ENCODE measurements at regions of chr11 and their contacts with region 1.

Region 1: DNA sequence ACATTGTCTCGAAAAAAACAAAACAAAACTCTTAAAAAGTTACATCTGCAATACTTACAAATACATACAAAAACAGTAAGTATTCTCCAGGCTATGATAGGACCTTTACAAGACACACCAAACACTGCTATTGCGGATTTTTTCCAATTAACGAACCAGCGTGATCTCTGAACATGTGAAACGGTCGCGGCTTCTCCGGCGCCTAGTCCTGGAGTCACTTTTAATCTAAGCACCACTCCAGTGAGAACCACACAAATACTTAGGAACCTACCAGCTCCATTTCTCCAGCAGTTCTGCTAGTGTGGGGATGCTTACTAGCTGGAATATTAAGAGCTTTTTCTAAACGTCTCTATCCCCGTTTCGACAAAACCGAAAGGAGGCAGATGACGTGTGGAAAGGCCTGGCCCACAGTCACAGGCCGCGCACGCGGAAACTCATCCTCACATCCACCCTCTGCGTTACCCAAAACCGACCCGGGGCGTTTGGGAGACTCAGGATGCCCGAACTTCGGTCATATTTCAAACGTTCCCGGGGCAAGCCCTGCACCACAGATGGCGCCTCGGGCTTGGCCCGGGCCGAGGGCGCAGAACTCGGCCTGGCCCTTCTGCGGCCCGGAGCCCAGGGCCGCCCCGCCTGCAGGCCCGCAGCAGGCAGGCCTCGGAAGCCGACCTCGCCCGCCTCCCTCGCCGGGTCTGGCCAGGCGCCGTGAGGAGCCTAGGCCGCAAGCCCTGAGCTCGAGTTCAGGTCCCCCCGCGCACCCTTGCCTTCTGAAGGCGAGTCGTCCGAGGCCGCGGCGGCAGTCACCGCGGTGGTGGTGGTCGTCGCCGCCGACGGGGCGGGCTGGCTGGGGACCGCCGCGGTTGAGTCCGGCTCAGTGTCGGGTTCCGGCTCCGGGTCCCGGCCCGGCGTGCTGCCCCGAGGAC is 575 bp downstream of the FNBP4 start:
- DNase-seq: peak; percentile 56 to 90 (median 68)
- ATAC-seq: peak; percentile 38
- H3K4me3 ChIP-seq: peak overlapping the region; percentile 89
- H3K4me3 Mint-ChIP-seq: peak overlapping the region; percentile 98
- H3K27ac ChIP-seq: peak overlapping the region; percentile 97 to 98
- H3K27ac Mint-ChIP-seq: peak overlapping the region; percentile 99
- H3K4me1 ChIP-seq: peaks cover 35% of the 10 kb centered on the region
- H3K4me1 Mint-ChIP-seq: peaks cover 34% of the 10 kb centered on the region
- H3K27me3 ChIP-seq: no peaks in the 10 kb centered on the region
- H3K27me3 Mint-ChIP-seq: no peaks in the 10 kb centered on the region
- CTCF ChIP-seq: no peak

Region 2: DNA sequence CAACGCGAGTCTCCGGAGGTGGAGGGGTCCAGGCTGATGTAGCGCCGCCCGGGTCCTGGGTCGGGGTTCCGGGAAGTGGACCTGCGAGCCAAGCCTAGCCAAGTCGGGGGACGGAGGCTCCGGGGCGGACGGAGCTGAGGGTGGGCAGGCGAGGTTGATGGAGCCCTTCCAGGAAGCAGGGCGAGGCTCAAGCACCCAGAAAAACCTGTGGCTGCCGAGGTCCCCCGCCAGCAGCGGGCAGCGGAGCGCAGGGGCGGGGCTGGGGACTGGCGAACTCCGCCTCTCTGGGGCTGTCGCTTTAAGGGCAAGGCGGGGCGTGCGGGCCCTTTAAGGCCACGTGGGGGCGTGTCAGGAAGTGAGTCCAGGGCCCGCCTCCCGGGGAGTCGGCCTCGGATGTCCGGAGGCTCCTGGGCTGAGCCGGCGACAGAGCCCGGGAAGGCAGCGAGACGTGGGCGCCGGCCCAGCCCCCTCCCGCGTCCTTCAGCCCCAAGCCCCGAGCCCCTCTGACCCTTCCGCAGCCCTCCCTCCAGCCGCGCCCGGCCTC is 1961.7 kb before region 1 on chr11 and contains the start of gene SLC35C1:
- CTCF ChIA-PET with region 1: no interaction called
- POLR2A ChIA-PET with region 1: no interaction called
- intact Hi-C with region 1: loop called in 1 of 2 experiments (anchors 5 kb)
- DNase-seq: peak; percentile 90 to 98 (median 96)
- ATAC-seq: peak; percentile 94
- H3K4me3 ChIP-seq: peak within 1 kb of the TSS; percentile 99
- H3K4me3 Mint-ChIP-seq: peak within 1 kb of the TSS; percentile 94
- H3K27ac ChIP-seq: peak within 1 kb of the TSS; percentile 76 to 79
- H3K27ac Mint-ChIP-seq: peak within 1 kb of the TSS; percentile 76
- H3K4me1 ChIP-seq: peaks cover 54% of the 10 kb centered on the region
- H3K4me1 Mint-ChIP-seq: peaks cover 53% of the 10 kb centered on the region
- H3K27me3 ChIP-seq: no peaks in the 10 kb centered on the region
- H3K27me3 Mint-ChIP-seq: no peaks in the 10 kb centered on the region
- CTCF ChIP-seq: no peak
- total RNA-seq, gene SLC35C1: 4.4 to 4.9 TPM

Region 3: GRCh38 chr11:47213985-47214564 is 552.5 kb before region 1 on chr11:
- CTCF ChIA-PET with region 1: no interaction called
- POLR2A ChIA-PET with region 1: interaction called, 10 read pairs
- intact Hi-C with region 1: no loop called
- DNase-seq: peak; percentile 68 to 92 (median 78)
- ATAC-seq: peak; percentile 70
- H3K4me3 ChIP-seq: peak overlapping the region; percentile 67
- H3K4me3 Mint-ChIP-seq: peak overlapping the region; percentile 100
- H3K27ac ChIP-seq: peak overlapping the region; percentile 80 to 91
- H3K27ac Mint-ChIP-seq: peak overlapping the region; percentile 97
- H3K4me1 ChIP-seq: peaks cover 32% of the 10 kb centered on the region
- H3K4me1 Mint-ChIP-seq: peaks cover 38% of the 10 kb centered on the region
- H3K27me3 ChIP-seq: no peaks in the 10 kb centered on the region
- H3K27me3 Mint-ChIP-seq: no peaks in the 10 kb centered on the region
- CTCF ChIP-seq: no peak

Region 4: DNA sequence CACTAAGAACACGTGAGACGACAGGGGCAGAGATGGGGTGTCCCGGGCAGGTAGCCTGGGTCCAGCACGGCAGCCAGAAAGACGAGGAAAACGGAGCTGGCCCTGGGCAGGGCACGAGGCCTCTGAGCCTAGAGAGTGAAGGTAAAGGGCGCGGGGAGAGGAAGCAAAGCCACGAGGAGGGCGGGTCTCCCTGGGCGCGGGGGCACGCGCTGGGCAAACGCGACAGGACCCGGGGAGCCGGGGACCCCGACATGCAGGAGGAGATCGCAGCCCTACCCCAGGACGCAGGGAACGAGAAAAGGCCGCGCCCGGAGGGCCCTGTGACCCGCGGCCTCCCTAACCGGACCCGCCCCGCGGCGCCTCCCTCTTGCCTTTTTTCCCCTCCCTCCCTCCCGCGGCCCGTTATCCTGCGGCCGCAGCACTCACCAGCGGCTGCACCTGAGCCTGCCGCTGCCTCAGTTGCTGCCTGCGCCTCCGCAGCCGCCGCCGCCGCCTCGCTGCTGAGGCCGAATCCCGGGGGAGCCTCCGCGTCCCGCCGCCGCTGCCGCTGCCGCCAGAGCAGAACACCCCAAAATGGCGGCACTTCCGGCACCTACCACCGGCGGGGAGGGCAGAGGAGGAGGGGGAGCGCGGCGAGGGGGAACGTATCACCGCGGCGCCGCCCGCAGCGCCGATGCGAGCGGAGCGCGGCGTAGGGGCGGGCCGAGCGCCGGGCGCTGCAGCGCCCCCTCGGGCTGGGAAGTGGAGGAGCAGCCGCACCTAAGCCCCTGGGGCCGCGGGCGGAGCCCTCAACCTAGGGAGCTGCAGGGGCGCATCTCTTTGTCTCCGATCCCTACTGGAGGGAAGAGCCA is 213.8 kb before region 1 on chr11 and contains the start of gene CELF1:
- CTCF ChIA-PET with region 1: no interaction called
- POLR2A ChIA-PET with region 1: no interaction called
- intact Hi-C with region 1: loop called in 1 of 2 experiments (anchors 2 kb)
- DNase-seq: peak; percentile 85 to 97 (median 91)
- ATAC-seq: peak; percentile 93
- H3K4me3 ChIP-seq: peak within 1 kb of the TSS; percentile 99
- H3K4me3 Mint-ChIP-seq: peak within 1 kb of the TSS; percentile 98
- H3K27ac ChIP-seq: peak within 1 kb of the TSS; percentile 78 to 88
- H3K27ac Mint-ChIP-seq: peak within 1 kb of the TSS; percentile 98
- H3K4me1 ChIP-seq: peaks cover 42% of the 10 kb centered on the region
- H3K4me1 Mint-ChIP-seq: peaks cover 54% of the 10 kb centered on the region
- H3K27me3 ChIP-seq: no peaks in the 10 kb centered on the region
- H3K27me3 Mint-ChIP-seq: no peaks in the 10 kb centered on the region
- CTCF ChIP-seq: peak; percentile 81
- total RNA-seq, gene CELF1: 103 to 111 TPM

Region 5: GRCh38 chr11:47642099-47642855 is 124.3 kb before region 1 on chr11 and contains the start of gene MTCH2:
- CTCF ChIA-PET with region 1: no interaction called
- POLR2A ChIA-PET with region 1: interaction called, 4 read pairs
- intact Hi-C with region 1: loop called (anchors 1 to 2 kb)
- DNase-seq: peak; percentile 91 to 99 (median 95)
- ATAC-seq: peak; percentile 92
- H3K4me3 ChIP-seq: peak within 1 kb of the TSS; percentile 96
- H3K4me3 Mint-ChIP-seq: peak within 1 kb of the TSS; percentile 90
- H3K27ac ChIP-seq: peak within 1 kb of the TSS; percentile 88 to 91
- H3K27ac Mint-ChIP-seq: peak within 1 kb of the TSS; percentile 89
- H3K4me1 ChIP-seq: peaks cover 28% of the 10 kb centered on the region
- H3K4me1 Mint-ChIP-seq: peaks cover 26% of the 10 kb centered on the region
- H3K27me3 ChIP-seq: no peaks in the 10 kb centered on the region
- H3K27me3 Mint-ChIP-seq: no peaks in the 10 kb centered on the region
- CTCF ChIP-seq: peak; percentile 6
- total RNA-seq, gene MTCH2: 11.8 to 12.7 TPM

Region 6: DNA sequence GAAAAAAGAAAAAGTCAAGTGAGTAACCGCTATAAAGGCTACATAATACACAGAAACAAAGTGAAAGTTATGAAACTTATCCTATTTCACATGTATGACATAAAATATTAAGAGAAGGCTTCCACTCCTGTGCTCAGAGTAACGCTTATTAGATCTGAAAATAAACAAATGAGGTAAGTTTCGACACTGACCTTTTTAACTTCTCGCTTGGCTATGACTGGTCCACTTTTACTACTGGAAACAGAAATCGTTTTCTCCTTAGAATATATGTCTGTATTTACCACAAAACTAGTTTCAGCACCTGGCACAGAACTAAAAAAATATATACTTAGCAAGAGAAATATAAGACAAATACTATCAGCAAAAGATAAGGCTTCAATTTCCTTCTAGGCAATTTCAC is 15.8 kb before region 1 on chr11:
- CTCF ChIA-PET with region 1: no interaction called
- POLR2A ChIA-PET with region 1: interaction called, 12 read pairs
- intact Hi-C with region 1: no loop called
- DNase-seq: no peak
- ATAC-seq: no peak
- H3K4me3 ChIP-seq: no peak overlapping the region
- H3K4me3 Mint-ChIP-seq: no peak overlapping the region
- H3K27ac ChIP-seq: no peak overlapping the region
- H3K27ac Mint-ChIP-seq: peak overlapping the region; percentile 47
- H3K4me1 ChIP-seq: no peaks in the 10 kb centered on the region
- H3K4me1 Mint-ChIP-seq: peaks cover 21% of the 10 kb centered on the region
- H3K27me3 ChIP-seq: no peaks in the 10 kb centered on the region
- H3K27me3 Mint-ChIP-seq: no peaks in the 10 kb centered on the region
- CTCF ChIP-seq: no peak

Region 7: GRCh38 chr11:47847892-47848635 is 81.5 kb after region 1 on chr11 and contains the start of gene NUP160:
- CTCF ChIA-PET with region 1: no interaction called
- POLR2A ChIA-PET with region 1: interaction called, 21 read pairs
- intact Hi-C with region 1: loop called (anchors 1 to 5 kb)
- DNase-seq: peak; percentile 74 to 93 (median 86)
- ATAC-seq: peak; percentile 86
- H3K4me3 ChIP-seq: peak within 1 kb of the TSS; percentile 75
- H3K4me3 Mint-ChIP-seq: peak within 1 kb of the TSS; percentile 100
- H3K27ac ChIP-seq: peak within 1 kb of the TSS; percentile 82 to 94
- H3K27ac Mint-ChIP-seq: peak within 1 kb of the TSS; percentile 98
- H3K4me1 ChIP-seq: peaks cover 46% of the 10 kb centered on the region
- H3K4me1 Mint-ChIP-seq: peaks cover 66% of the 10 kb centered on the region
- H3K27me3 ChIP-seq: no peaks in the 10 kb centered on the region
- H3K27me3 Mint-ChIP-seq: no peaks in the 10 kb centered on the region
- CTCF ChIP-seq: peak; percentile 15
- total RNA-seq, gene NUP160: 41.9 to 47.9 TPM

Region 8: DNA sequence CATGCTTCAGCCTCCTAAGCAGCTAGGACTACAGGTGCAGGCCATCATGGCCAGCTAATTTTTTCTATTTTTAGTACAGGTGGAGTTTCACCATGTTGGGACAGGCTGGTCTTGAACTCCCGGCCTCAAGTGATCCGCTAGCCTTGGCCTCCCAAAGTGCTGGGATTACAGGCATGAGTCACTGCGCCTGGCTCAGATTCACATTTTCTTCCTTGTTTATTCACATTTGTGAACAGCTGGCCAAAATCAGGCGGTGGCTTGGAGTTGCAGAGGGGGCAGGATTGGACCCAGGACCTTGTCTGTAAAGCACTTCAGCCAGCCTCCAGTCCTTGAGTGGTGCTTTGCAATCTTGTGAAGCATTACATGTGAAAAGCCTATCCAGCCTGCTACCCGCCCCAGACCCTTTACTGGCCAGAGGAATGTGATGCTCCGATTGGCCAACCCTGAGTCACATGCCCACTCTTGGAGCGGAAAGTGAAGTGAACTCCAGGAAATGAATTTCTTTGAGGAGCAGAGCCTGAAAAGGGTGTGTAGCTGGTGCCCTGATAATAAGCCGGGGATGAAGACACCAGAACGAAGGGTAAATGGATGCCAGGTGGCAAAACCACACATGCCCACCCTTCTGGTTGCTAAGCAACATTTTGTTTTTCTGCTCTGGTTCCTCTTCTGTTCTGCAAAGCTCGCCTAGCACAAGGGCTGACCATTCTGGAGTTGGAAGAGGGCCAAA is 151.2 kb after region 1 on chr11:
- CTCF ChIA-PET with region 1: no interaction called
- POLR2A ChIA-PET with region 1: no interaction called
- intact Hi-C with region 1: no loop called
- DNase-seq: peak in 3 of 14 experiments; percentile 33 to 49 (median 42)
- ATAC-seq: no peak
- H3K4me3 ChIP-seq: no peak overlapping the region
- H3K4me3 Mint-ChIP-seq: no peak overlapping the region
- H3K27ac ChIP-seq: peak overlapping the region in 1 of 2 donors; percentile 41
- H3K27ac Mint-ChIP-seq: peak overlapping the region; percentile 78
- H3K4me1 ChIP-seq: peaks cover 68% of the 10 kb centered on the region
- H3K4me1 Mint-ChIP-seq: peaks cover 59% of the 10 kb centered on the region
- H3K27me3 ChIP-seq: no peaks in the 10 kb centered on the region
- H3K27me3 Mint-ChIP-seq: no peaks in the 10 kb centered on the region
- CTCF ChIP-seq: no peak

Region 9: GRCh38 chr11:48081151-48082010 is 314.8 kb after region 1 on chr11:
- CTCF ChIA-PET with region 1: no interaction called
- POLR2A ChIA-PET with region 1: no interaction called
- intact Hi-C with region 1: no loop called
- DNase-seq: peak in 8 of 14 experiments; percentile 4 to 65 (median 30)
- ATAC-seq: peak; percentile 49
- H3K4me3 ChIP-seq: no peak overlapping the region
- H3K4me3 Mint-ChIP-seq: no peak overlapping the region
- H3K27ac ChIP-seq: no peak overlapping the region
- H3K27ac Mint-ChIP-seq: peak overlapping the region; percentile 47
- H3K4me1 ChIP-seq: peaks cover 32% of the 10 kb centered on the region
- H3K4me1 Mint-ChIP-seq: peaks cover 50% of the 10 kb centered on the region
- H3K27me3 ChIP-seq: no peaks in the 10 kb centered on the region
- H3K27me3 Mint-ChIP-seq: no peaks in the 10 kb centered on the region
- CTCF ChIP-seq: no peak